ENCODE measurements at regions of chr20 and their contacts with region 1.

Region 1: GRCh38 chr20:47336129-47336835 is 20.2 kb downstream of the ZMYND8 start:
- DNase-seq: no peak
- ATAC-seq: no peak; the same call in 1 of the 2 replicates
- H3K4me3 Mint-ChIP-seq: no peak overlapping the region
- H3K27ac Mint-ChIP-seq: peak overlapping the region; percentile 85
- H3K4me1 Mint-ChIP-seq: peaks cover 76% of the 10 kb centered on the region
- H3K27me3 Mint-ChIP-seq: no peaks in the 10 kb centered on the region
- CTCF ChIP-seq: no peak

Region 2: DNA sequence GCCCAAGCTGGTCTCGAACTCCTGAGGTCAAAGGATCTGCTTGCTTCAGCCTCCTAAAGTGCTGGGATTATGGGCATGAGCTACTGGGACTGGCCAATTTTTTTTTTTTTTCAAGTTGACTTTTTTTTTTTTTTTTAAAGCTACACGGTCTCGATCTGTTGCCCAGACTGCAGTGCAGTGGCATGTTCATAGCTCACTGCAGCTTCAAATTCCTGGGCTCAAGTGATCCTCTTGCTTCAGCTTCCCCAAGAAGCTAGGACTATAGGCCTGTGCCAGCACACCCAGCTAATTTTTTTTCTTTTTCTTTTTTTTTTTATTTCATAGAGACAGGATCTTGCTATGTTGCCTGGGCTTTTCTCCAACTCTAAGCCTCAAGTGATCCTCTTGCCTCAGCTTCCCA is 224.9 kb after region 1 on chr20:
- CTCF ChIA-PET with region 1: no interaction called
- POLR2A ChIA-PET with region 1: interaction called, 11 read pairs
- DNase-seq: no peak
- ATAC-seq: no peak
- H3K4me3 Mint-ChIP-seq: no peak overlapping the region
- H3K27ac Mint-ChIP-seq: no peak overlapping the region
- H3K4me1 Mint-ChIP-seq: peaks cover 68% of the 10 kb centered on the region
- H3K27me3 Mint-ChIP-seq: no peaks in the 10 kb centered on the region
- CTCF ChIP-seq: no peak

Measured in WTC11 (cell line).